ENCODE measurements at regions of chr11 and their contacts with region 1.

Region 1: DNA sequence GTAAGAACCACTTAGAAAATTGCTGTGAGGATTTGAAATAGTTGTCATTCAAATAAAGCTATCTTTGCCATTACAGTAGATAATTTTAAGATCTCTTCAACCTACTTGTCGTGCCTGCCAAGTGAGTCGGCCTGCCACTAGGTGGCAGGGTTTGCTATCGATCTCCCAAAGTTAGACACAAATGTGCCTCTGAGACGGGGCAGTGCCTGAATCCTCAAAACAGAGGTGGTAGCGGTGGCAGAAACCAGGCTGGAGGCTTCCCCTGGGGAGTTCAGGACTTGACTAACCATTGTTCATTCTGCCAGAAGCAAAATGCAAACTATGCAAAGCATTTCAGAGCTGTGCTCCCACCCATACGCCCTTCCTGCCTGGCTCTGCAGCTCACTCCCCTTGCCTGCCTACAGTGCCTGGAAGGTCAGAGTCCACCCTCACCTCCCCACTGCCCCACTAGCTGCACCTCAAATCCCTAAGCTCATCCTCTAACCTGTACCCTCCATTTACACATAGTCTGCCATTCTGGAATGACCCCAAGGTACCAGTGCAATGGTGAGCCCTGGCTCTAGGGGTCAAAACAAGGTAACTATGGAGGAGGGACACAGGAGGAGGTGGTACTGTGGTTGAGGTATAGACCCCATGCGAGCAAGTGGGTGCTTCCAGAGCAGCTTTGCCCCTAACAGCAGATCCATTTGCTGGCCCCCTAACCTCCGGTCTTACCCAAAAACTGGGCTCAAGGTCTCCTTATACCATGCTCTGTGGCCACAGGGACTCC is 82.1 kb downstream of the C11orf58 start:
- DNase-seq: peak; percentile 77
- H3K4me3 Mint-ChIP-seq: no peak overlapping the region
- H3K27ac Mint-ChIP-seq: no peak overlapping the region
- H3K4me1 Mint-ChIP-seq: no peaks in the 10 kb centered on the region
- H3K27me3 Mint-ChIP-seq: peaks cover 13% of the 10 kb centered on the region

Region 2: DNA sequence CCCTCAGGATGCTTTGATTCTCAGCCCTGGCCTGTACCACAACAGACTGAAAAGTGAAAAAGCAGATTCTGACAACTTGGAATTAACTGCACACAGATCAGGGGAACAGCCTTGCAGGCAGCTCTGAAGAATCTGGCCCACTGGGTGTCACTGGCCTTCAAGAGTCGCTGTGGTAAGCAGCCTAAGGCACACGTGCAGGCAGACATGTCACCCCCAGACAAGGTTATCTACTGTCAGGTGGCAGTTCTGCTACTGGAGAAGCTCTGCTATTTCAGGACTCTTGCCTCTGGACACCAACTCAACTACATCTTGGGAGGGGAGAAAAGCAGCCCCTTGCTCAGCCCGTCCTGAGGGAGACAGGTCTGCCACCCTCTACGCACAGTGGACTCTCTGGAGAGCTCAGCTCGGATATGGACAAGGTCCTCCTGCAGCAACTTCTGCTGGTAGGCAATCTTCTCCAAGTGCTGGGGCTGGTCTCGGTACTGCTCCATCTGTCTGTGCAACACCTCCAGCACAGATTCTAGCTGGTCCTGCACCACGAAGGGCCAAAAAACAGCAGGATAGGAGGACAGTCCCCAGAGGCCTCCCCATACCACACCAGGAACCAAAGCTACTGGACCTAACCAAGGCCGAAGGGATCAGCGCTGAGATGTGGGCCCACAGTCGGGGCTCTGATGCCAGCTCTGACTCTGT is 19.1 kb before region 1 on chr11:
- CTCF ChIA-PET with region 1: interaction called, 11 read pairs
- DNase-seq: no peak
- H3K4me3 Mint-ChIP-seq: no peak overlapping the region
- H3K27ac Mint-ChIP-seq: no peak overlapping the region
- H3K4me1 Mint-ChIP-seq: no peaks in the 10 kb centered on the region
- H3K27me3 Mint-ChIP-seq: no peaks in the 10 kb centered on the region

Region 3: DNA sequence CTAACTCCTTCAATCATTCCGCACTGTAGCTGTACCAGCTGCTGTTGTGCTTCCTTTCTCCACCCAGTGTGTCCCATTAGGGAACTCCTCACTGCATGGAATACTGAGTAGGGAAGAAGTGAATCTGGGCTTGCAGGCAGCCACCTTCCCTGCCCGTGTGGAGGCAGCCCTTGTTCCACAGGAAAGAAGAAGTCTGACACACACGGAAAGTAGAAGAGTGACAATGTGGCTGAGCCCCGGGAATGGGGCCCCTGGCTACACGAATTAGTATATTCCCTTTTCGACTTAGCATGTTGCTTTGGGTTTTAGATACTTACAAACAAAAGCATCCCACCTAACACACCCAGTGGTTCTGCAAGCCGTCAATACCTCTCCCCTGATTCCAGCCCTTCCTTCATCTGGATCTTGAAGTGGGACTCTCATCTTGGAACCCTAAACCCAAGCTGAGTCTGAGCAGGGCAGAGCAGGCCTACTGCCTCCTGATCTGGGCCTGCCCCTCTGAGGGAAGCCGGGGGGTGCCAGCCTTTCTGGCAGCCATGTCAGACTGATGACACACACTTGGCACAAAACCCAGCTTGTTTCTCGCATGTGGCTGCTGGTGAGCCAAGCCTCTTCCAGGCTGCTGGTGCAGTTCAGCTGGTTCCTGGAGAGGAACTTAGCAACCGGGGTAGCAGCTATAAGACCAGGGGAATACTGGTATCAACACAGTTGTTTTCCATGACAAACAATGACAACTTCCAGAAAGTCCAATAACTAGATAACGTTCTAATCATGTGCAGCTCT is 10.4 kb before region 1 on chr11:
- CTCF ChIA-PET with region 1: interaction called, 16 read pairs
- DNase-seq: no peak
- H3K4me3 Mint-ChIP-seq: no peak overlapping the region
- H3K27ac Mint-ChIP-seq: no peak overlapping the region
- H3K4me1 Mint-ChIP-seq: no peaks in the 10 kb centered on the region
- H3K27me3 Mint-ChIP-seq: peaks cover 3% of the 10 kb centered on the region

Region 4: DNA sequence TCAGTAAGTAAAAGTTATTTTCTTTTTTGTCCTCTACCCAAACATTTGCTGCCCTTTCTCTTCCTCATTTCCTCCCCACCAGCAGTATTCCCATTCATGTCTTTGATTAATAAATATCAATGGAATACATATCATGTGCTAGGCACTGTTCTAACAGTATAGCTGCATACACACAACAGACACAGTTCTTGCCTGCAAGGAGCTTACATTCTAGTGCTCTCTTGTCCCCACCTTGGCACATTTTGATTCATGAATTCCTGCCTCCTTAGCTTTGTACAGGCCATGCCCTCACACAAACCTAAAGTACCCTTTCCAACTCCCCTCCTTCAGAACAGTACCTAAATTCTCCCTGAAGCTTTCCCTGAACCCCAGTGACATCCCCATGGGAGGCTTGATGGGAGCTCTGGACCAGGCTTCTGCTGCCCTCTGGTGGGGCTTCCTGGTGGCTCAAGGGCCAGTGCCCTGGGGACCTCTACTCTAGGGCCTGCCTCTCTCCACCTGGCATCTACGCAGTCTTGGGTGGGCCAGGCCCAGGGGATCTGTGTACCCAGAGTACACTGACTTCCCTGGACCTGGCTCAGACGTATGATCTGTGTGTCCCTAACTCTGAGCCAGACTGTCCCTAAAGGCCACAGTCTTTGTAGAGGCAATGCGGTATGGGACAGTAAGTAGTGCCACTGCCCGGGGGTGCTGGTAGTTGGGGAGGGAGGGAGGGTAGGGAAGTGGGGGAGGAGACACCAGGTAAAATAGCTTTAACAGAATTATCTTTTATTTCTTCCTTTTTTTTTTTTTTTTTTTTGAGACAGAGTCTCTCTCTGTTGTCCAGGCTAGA is 242.9 kb after region 1 on chr11:
- CTCF ChIA-PET with region 1: interaction called, 21 read pairs
- DNase-seq: peak; percentile 70
- H3K4me3 Mint-ChIP-seq: no peak overlapping the region
- H3K27ac Mint-ChIP-seq: no peak overlapping the region
- H3K4me1 Mint-ChIP-seq: no peaks in the 10 kb centered on the region
- H3K27me3 Mint-ChIP-seq: peaks cover 3% of the 10 kb centered on the region